Activated naive CD4-positive, alpha-beta T cell treated with anti-CD3 and anti-CD28 coated beads, Interleukin-2, amount 10 ng/mL, durations not matched to agents 7 days and 5 days (primary cell): ENCODE measurements at regions of chr18 and their contacts with region 1.

Region 1: DNA sequence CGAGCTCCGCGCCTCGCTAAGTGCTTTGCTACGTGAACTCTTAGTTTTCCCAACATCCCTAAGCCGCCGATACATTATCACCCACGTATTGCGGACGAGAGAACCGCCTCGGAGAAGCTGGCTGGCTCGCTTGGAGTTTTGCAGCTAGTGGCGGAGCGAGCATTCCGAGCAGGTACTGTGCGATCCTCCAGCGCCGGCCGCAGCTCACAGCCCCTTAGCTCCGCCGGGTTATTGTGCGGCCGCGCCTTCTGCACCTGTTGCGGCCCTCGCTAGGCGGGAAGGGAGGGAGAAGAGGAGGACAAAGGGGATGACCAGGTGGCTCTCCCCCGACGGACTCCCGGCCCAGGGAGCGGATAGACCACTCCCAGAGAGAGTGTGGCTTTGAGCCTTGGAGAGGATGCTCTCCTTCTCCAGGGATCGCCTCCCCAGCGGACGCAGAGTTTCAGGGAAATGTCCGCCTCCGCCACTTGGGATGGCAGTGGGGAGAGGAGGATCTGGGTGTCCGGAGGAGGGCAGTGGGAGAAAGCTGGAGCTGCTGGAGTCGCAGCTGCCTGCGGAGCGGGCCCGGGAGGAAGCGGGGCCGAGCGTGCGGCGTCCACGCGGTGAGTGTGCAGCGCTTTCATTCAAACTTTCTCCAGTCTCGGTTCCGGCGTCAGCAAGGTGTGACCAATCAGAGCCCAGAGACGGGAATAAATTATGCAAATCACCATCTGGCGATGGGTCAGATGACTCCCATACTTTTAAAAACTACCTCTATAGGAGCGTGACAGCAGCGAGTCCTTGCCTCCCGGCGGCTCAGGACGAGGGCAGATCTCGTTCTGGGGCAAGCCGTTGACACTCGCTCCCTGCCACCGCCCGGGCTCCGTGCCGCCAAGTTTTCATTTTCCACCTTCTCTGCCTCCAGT is at the start of gene LIPG:
- DNase-seq: peak; percentile 71
- H3K4me3 Mint-ChIP-seq: peak within 1 kb of the TSS; percentile 55
- H3K27ac Mint-ChIP-seq: no peak within 1 kb of the TSS
- H3K4me1 Mint-ChIP-seq: peaks cover 31% of the 10 kb centered on the region
- H3K27me3 Mint-ChIP-seq: peaks cover 91% of the 10 kb centered on the region

Region 2: GRCh38 chr18:49510393-49511115 is 51.0 kb before region 1 on chr18:
- CTCF ChIA-PET with region 1: interaction called, 12 read pairs
- DNase-seq: peak; percentile 65
- H3K4me3 Mint-ChIP-seq: no peak overlapping the region
- H3K27ac Mint-ChIP-seq: no peak overlapping the region
- H3K4me1 Mint-ChIP-seq: no peaks in the 10 kb centered on the region
- H3K27me3 Mint-ChIP-seq: peaks cover 16% of the 10 kb centered on the region

Region 3: DNA sequence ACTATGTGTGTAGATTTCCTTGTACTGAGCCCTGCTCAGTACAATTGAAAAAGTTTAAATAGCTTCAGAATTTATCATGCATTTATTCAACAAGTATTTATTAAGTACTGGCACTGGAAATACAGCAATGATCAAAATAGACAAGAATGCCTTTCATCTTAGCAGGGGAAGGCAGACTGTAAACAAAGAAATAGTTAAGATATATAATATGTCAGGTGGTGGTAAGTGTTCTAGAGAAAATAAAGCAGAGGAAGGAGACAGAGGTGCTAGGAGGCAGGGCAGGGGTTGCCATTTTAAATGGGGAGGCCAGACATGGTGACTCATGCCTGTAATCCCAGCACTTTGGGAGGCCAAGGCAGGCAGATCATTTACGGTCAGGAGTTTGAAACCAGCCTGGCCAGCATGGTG is 13.3 kb before region 1 on chr18:
- CTCF ChIA-PET with region 1: no interaction called
- DNase-seq: no peak
- H3K4me3 Mint-ChIP-seq: no peak overlapping the region
- H3K27ac Mint-ChIP-seq: no peak overlapping the region
- H3K4me1 Mint-ChIP-seq: no peaks in the 10 kb centered on the region
- H3K27me3 Mint-ChIP-seq: peaks cover 16% of the 10 kb centered on the region